ENCODE measurements at regions of chr9 and their contacts with region 1.

Region 1: GRCh38 chr9:36575411-36575882 is 2.8 kb downstream of the MELK start:
- DNase-seq: no peak

Region 2: GRCh38 chr9:35972093-35972492 is 603.4 kb before region 1 on chr9:
- intact Hi-C with region 1: loop called in 1 of 2 experiments (anchors 5 kb)
- DNase-seq: no peak

Region 3: GRCh38 chr9:36637491-36638270 is 62.2 kb after region 1 on chr9:
- intact Hi-C with region 1: loop called in 1 of 2 experiments (anchors 2 kb)
- DNase-seq: no peak

Region 4: DNA sequence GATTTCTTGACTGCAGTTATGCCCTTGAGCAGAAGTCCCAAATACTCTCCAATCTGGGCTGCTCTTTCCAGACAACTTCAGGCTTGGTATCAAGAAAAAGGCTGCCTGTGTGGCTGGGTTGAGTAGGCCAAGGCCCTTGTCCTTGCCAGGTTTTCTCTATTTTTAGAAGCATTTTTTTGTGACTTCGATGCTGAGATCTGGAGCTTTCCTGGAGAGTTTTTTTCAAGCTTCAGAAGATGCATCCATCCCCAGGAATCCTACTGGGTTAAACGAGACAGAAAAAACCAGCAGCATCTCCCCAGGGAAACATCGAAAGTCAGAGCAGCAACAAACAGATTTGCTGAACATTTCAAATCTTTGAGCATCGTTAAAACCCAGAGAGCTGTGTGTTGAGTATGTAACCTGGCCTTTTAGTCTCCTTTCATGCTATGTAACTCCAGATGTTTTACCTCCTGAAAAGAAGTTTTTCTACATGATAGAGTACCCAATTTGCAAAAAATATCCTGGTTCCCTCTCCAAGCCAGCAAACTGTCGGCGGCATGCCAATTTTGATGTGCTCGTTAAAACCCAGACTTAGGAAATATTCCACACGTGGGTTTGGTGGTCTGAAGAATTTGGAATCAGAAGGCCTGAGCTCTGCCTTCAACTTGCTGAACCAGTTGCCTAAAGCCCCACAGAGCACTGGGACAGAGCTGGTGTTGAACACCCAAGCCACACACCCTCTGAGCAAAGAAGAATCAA is 1718.9 kb after region 1 on chr9:
- intact Hi-C with region 1: no loop called
- DNase-seq: no peak